ENCODE measurements at regions of chr3 and their contacts with region 1.

Region 1: GRCh38 chr3:105686278-105686897 is 182.4 kb downstream of the CBLB start:
- DNase-seq: peak; percentile 0
- ATAC-seq: no peak
- H3K4me3 ChIP-seq: no peak overlapping the region
- H3K27ac ChIP-seq: no peak overlapping the region
- H3K4me1 ChIP-seq: no peaks in the 10 kb centered on the region
- H3K27me3 ChIP-seq: no peaks in the 10 kb centered on the region
- CTCF ChIP-seq: peak; percentile 41 to 79 (median 66); a peak in 5 of 6 replicates
- POLR2A ChIP-seq: no peak
- RAD21 ChIP-seq: peak; percentile 71

Region 2: DNA sequence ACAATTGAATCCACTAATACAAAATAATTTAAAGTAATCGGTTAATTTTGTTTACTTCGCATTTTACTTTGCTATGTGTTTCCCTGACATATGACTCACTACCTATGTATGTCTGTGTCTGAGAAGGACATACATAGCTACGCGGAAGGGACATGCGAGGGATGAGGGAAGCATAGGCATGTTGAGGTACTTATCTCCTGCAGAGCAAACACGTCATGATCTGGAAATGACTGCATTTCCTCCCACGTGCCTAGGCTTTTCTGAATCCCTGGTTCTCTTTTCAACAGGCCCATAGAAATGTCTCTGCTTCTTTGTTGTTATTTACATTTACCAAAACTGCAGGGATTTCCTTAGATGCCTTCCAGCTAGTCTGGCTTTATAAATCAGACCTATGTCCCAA is 292.2 kb before region 1 on chr3:
- CTCF ChIA-PET with region 1: no interaction called
- POLR2A ChIA-PET with region 1: no interaction called
- RAD21 ChIA-PET with region 1: no interaction called
- intact Hi-C with region 1: no loop called
- DNase-seq: no peak
- ATAC-seq: no peak
- H3K4me3 ChIP-seq: no peak overlapping the region
- H3K27ac ChIP-seq: no peak overlapping the region
- H3K4me1 ChIP-seq: peaks cover 6 to 14% of the 10 kb centered on the region in 2 experiments; a peak in 3 of 4 replicates
- H3K27me3 ChIP-seq: no peaks in the 10 kb centered on the region
- CTCF ChIP-seq: no peak
- POLR2A ChIP-seq: no peak
- RAD21 ChIP-seq: no peak

Region 3: GRCh38 chr3:106119614-106120082 is 433.3 kb after region 1 on chr3:
- CTCF ChIA-PET with region 1: interaction called, 4 read pairs
- POLR2A ChIA-PET with region 1: no interaction called
- RAD21 ChIA-PET with region 1: no interaction called
- intact Hi-C with region 1: loop called (anchors 5 kb)
- DNase-seq: no peak
- ATAC-seq: no peak
- H3K4me3 ChIP-seq: no peak overlapping the region
- H3K27ac ChIP-seq: no peak overlapping the region
- H3K4me1 ChIP-seq: peaks cover 0 to 31% of the 10 kb centered on the region in 2 experiments; a peak in 3 of 4 replicates
- H3K27me3 ChIP-seq: no peaks in the 10 kb centered on the region
- CTCF ChIP-seq: no peak
- POLR2A ChIP-seq: no peak
- RAD21 ChIP-seq: no peak

Region 4: DNA sequence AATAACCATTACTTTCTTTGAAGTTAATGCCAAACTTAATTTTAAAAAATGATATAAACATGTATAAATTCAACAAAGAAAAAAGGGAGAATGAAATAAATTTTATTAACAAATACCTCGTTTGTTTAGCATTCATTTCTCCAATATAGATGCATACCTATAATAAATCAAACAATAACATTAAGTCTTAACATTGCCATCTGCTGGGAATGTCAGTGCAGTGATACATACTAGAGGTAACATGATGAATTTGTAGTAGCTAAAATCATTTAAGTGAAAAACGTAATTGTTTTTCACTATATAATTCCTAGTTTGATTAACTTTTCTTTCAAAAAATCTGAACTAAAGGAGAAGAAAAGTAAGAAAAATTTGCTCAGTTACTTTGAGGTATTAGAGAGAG is 522.6 kb after region 1 on chr3:
- CTCF ChIA-PET with region 1: no interaction called
- POLR2A ChIA-PET with region 1: no interaction called
- RAD21 ChIA-PET with region 1: no interaction called
- intact Hi-C with region 1: loop called (anchors 2 kb)
- DNase-seq: no peak
- ATAC-seq: no peak
- H3K4me3 ChIP-seq: no peak overlapping the region
- H3K27ac ChIP-seq: no peak overlapping the region
- H3K4me1 ChIP-seq: no peaks in the 10 kb centered on the region; a peak in 1 of 4 replicates
- H3K27me3 ChIP-seq: no peaks in the 10 kb centered on the region
- CTCF ChIP-seq: peak in 1 of 3 experiments; percentile 29; a peak in 1 of 6 replicates
- POLR2A ChIP-seq: no peak
- RAD21 ChIP-seq: peak; percentile 37; the same call in 1 of the 2 replicates

Region 5: GRCh38 chr3:106609666-106610301 is 923.4 kb after region 1 on chr3:
- CTCF ChIA-PET with region 1: interaction called, 8 read pairs
- POLR2A ChIA-PET with region 1: no interaction called
- RAD21 ChIA-PET with region 1: no interaction called
- intact Hi-C with region 1: loop called (anchors 1 kb)
- DNase-seq: peak; percentile 62
- ATAC-seq: peak; percentile 82
- H3K4me3 ChIP-seq: no peak overlapping the region
- H3K27ac ChIP-seq: no peak overlapping the region
- H3K4me1 ChIP-seq: no peaks in the 10 kb centered on the region
- H3K27me3 ChIP-seq: no peaks in the 10 kb centered on the region
- CTCF ChIP-seq: peak; percentile 55 to 86 (median 82); a peak in 5 of 6 replicates
- POLR2A ChIP-seq: no peak
- RAD21 ChIP-seq: peak; percentile 85

Region 6: DNA sequence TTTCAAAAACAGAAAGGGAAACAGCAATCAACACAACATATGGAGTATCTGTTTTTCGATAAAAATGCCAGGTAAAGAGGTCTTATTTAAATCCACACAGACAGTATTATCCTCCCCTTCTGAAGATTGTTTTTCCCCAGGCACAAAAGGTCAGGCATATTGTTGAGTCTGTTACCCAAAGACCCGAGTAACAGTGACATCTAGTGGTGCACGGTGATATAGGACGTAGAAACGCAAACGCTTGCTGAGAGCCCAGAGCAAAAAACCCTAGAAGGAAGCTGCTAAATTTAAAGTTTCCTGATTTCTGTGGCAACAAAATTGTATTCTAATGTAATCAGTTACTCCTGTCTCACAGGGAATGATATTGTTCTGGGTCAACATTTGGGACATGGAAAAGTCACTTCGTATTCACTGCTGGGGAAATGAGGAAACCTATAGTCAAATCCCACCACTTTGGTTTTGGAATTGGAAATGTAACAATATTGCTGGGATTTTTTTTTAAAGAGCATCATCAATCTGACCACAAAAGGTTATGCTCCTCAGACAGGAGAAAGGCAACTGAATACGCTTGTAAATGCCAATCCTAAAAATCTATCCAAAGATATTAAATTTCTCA is 1378.2 kb after region 1 on chr3:
- CTCF ChIA-PET with region 1: no interaction called
- POLR2A ChIA-PET with region 1: no interaction called
- RAD21 ChIA-PET with region 1: no interaction called
- intact Hi-C with region 1: loop called (anchors 5 kb)
- DNase-seq: peak; percentile 57
- ATAC-seq: peak; percentile 83
- H3K4me3 ChIP-seq: no peak overlapping the region
- H3K27ac ChIP-seq: no peak overlapping the region
- H3K4me1 ChIP-seq: peaks cover 7 to 10% of the 10 kb centered on the region in 2 experiments; a peak in 3 of 4 replicates
- H3K27me3 ChIP-seq: no peaks in the 10 kb centered on the region
- CTCF ChIP-seq: peak; percentile 45 to 88 (median 86); a peak in 5 of 6 replicates
- POLR2A ChIP-seq: no peak
- RAD21 ChIP-seq: peak; percentile 80

Region 7: DNA sequence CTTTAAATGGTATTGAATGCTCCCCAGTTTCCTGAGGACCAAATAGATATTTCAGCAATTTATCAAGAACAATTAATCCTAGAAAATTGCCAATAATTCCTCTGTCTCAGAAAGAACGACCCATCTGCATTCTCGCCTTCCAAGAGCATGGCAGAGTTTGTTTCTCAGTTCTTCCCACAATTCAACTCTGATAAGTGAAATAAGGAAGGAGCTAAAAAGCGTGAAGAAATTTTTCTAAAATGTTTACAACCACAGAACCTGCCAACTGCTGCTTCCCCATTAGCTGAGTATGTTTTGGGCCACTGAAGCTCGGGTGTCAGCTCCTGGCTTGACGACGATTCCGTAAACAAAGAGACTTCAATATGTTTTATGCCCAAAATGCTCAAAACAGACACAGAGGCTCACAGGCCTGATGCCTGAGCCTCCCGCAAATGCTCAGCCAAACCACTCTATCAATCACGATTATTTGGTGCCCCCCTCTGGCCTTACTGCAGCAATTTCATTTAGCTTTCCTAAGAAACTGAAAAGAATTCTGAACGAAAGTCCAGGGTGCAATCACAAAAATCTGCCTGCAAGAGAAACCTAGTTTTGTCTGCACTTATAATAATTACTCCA is 1431.6 kb after region 1 on chr3:
- CTCF ChIA-PET with region 1: no interaction called
- POLR2A ChIA-PET with region 1: no interaction called
- RAD21 ChIA-PET with region 1: no interaction called
- intact Hi-C with region 1: loop called (anchors 5 kb)
- DNase-seq: peak; percentile 59
- ATAC-seq: peak; percentile 88
- H3K4me3 ChIP-seq: no peak overlapping the region
- H3K27ac ChIP-seq: no peak overlapping the region
- H3K4me1 ChIP-seq: peaks cover 0 to 4% of the 10 kb centered on the region in 2 experiments; a peak in 1 of 4 replicates
- H3K27me3 ChIP-seq: no peaks in the 10 kb centered on the region
- CTCF ChIP-seq: peak; percentile 46 to 80 (median 60); a peak in 5 of 6 replicates
- POLR2A ChIP-seq: no peak
- RAD21 ChIP-seq: peak; percentile 80